Endothelial cell of umbilical vein (primary cell): ENCODE measurements at regions of chr12 and their contacts with region 1.

Region 1: DNA sequence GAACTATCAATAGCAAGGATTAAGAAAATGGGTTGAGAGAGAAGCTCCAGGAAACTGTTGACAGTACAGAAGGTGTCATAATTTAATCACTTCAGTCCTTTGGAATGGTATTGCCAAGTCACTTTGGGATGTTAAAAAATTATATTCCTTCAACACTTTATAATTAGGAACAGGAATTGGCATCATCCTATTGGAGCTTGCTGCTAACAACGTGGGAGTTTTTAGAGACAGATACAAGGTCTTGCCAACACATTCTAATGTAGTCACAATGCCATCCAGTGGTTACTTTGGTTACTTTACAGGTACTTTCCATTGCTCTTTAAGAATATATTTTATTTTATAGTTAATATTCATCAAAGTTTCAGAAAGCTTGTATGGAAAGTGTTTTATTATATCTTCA is 310.1 kb downstream of the SYT1 start:
- DNase-seq: peak; percentile 81
- H3K4me3 ChIP-seq: no peak overlapping the region
- H3K27ac ChIP-seq: no peak overlapping the region
- H3K4me1 ChIP-seq: no peaks in the 10 kb centered on the region
- H3K27me3 ChIP-seq: no peaks in the 10 kb centered on the region
- CTCF ChIP-seq: peak in 1 of 2 donors; percentile 29
- POLR2A ChIP-seq: no peak

Region 2: GRCh38 chr12:78146365-78146772 is 1028.3 kb before region 1 on chr12:
- CTCF ChIA-PET with region 1: interaction called, 25 read pairs
- POLR2A ChIA-PET with region 1: no interaction called
- dilution Hi-C with region 1: no loop called
- intact Hi-C with region 1: loop called (anchors 5 kb)
- DNase-seq: peak; percentile 59
- H3K4me3 ChIP-seq: no peak overlapping the region
- H3K27ac ChIP-seq: no peak overlapping the region
- H3K4me1 ChIP-seq: no peaks in the 10 kb centered on the region
- H3K27me3 ChIP-seq: no peaks in the 10 kb centered on the region
- CTCF ChIP-seq: peak; percentile 49 to 54
- POLR2A ChIP-seq: no peak

Region 3: DNA sequence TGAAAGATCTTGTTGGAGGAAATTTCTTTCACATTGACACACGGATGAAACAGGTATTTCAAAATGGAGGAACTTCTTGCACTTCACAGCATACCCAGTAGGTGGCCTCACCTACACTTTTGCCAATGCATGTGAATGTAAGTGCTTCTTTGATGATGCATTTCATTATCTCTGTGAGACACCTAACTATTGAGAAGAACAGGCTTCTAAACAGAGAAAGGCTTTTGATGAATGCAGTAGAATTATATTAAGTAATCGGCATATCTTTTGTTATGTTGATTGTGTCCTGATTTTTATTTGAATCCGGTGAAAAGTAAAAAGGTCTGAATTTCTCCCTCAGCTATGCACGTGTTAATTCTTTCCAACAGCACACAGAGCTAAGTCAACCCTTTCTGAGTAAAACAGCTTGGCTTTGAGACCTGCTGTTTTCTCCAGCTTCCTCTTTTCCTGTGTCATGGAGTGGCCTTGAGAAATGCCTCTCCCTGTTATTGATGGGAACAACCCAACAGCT is 945.0 kb before region 1 on chr12:
- CTCF ChIA-PET with region 1: interaction called, 21 read pairs
- POLR2A ChIA-PET with region 1: no interaction called
- dilution Hi-C with region 1: no loop called
- intact Hi-C with region 1: loop called (anchors 2 kb)
- DNase-seq: peak; percentile 47
- H3K4me3 ChIP-seq: no peak overlapping the region
- H3K27ac ChIP-seq: no peak overlapping the region
- H3K4me1 ChIP-seq: no peaks in the 10 kb centered on the region
- H3K27me3 ChIP-seq: no peaks in the 10 kb centered on the region
- CTCF ChIP-seq: peak; percentile 56 to 67
- POLR2A ChIP-seq: no peak

Region 4: DNA sequence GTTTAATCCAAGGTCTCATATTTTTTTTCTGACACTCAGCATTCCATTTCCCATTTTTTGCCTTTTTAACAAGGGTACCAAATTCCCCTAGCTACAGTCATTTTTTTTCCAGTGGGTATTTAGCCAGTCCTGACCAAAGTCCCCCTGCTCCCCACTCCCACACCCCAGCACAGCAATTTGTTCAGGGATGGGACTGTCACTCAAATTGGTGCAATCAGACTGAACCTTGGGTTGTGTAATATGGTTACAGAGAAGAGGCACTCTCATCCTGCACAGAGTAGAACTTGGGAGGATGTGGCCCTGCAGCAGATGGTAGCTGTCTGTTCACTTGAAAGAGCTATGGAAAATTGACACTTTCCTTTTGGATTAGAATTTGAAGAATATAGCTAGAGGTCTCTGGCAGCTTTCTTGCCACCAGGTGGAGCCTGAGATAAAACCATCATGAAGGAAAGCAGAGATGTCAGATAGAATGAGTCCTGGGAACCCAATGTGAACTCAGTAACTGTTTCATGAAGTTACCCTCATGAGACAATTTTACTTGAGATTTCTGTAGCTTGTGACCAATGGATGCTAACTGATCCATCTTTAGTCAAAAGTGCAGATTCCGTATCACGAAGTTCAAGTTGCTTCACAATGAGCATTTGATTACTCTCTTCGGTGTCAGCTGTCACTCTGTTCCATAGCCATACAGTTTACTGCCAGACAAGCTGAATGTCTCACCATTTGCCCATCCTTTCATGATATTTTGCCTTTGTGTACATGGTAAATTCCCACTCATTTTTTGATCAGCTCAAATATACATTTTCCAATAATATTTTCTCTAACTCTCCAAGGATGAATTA is 704.1 kb before region 1 on chr12:
- CTCF ChIA-PET with region 1: interaction called, 136 read pairs
- POLR2A ChIA-PET with region 1: no interaction called
- dilution Hi-C with region 1: no loop called
- intact Hi-C with region 1: loop called (anchors 1 kb)
- DNase-seq: peak; percentile 57
- H3K4me3 ChIP-seq: no peak overlapping the region
- H3K27ac ChIP-seq: no peak overlapping the region
- H3K4me1 ChIP-seq: no peaks in the 10 kb centered on the region
- H3K27me3 ChIP-seq: peaks cover 0 to 10% of the 10 kb centered on the region in 2 experiments
- CTCF ChIP-seq: peak; percentile 47 to 72
- POLR2A ChIP-seq: no peak

Region 5: DNA sequence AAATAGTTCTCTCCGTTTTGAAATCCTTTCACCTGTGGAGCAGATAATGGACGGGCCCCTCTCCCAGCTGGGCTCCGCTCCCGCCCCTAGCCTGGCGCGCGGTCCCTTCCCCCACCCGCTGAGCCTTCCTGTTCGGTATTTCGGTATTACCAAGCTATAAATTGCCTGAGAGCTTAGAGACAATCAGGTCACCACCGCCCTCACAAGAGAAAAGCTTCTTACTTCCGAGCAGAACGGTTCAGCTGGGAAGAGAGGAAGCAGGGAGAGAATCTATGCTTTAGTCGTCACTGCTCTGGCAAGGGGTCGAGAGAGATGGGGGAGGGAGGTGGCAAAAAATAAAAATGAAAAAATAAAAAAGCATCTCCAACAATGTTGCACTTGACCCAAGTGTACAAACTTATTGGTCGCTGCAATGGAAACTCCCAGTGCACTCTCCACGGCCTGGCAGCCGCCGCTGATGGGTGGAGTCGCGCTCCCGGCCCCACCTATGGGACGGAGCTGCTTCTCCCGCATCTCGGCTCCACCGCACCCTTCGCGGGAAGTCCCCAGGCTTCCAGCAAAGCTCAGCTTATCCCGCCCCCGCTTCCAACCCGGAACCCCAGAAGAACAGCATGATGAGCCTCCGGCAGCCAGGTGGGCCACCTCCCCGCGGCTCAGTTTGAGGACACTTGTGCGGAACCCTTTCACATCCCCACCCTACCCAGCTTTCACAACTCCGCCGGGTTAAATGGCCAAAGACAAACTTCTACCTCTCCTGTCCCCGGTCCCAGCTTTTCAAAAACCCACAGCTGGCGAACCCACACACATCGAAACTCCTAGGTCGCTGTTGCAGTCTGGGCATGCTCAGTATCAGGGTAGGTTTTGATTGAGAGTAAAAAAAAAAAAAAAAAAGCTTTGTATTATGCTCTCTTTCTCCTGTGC is 310.9 kb before region 1 on chr12:
- CTCF ChIA-PET with region 1: interaction called, 10 read pairs
- POLR2A ChIA-PET with region 1: no interaction called
- dilution Hi-C with region 1: no loop called
- intact Hi-C with region 1: loop called (anchors 2 kb)
- DNase-seq: peak; percentile 66
- H3K4me3 ChIP-seq: peak overlapping the region; percentile 45 to 91 (median 88)
- H3K27ac ChIP-seq: peak overlapping the region; percentile 69
- H3K4me1 ChIP-seq: peaks cover 9% of the 10 kb centered on the region
- H3K27me3 ChIP-seq: peaks cover 6 to 9% of the 10 kb centered on the region in 2 experiments
- CTCF ChIP-seq: no peak
- POLR2A ChIP-seq: no peak